Mammary epithelial cell (primary cell): ENCODE measurements at regions of chr17 and their contacts with region 1.

Region 1: GRCh38 chr17:44940321-44940720 is 7.3 kb downstream of the KIF18B start:
- DNase-seq: peak; percentile 49
- H3K4me3 ChIP-seq: no peak overlapping the region
- H3K27ac ChIP-seq: peak overlapping the region; percentile 67
- H3K4me1 ChIP-seq: peaks cover 31% of the 10 kb centered on the region
- H3K27me3 ChIP-seq: no peaks in the 10 kb centered on the region
- CTCF ChIP-seq: no peak

Region 2: DNA sequence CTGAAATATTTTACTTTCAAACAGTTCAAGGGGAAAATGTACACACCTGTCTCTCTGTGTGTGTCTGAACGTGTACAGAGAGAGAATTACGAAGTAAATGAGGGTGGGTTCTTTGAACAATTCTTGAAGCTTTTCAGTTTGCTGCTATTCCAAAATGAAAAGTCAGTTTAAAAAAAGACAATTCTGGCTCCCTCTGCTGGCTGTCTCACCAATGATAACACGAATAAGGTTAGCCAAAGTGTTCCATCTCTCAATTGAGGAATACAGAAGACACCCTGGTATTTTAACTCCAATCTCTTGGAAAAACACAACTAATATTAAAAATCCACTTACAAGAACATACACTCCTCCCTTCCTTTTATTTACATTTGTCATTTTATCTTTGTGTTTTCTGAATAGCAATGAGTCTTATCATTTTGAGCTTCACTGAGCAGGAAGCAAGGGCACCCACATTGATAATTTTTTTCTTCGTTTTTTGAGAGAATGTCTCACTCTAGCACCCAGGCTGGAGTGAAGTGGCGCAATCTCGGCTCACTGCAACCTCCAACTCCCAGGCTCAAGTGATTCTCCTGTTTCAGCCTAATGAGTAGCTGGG is 61.6 kb before region 1 on chr17:
- CTCF ChIA-PET with region 1: no interaction called
- dilution Hi-C with region 1: no loop called
- in situ Hi-C with region 1: no loop called
- intact Hi-C with region 1: no loop called
- DNase-seq: no peak
- H3K4me3 ChIP-seq: no peak overlapping the region
- H3K27ac ChIP-seq: no peak overlapping the region
- H3K4me1 ChIP-seq: no peaks in the 10 kb centered on the region
- H3K27me3 ChIP-seq: no peaks in the 10 kb centered on the region
- CTCF ChIP-seq: peak; percentile 46 to 64

Region 3: DNA sequence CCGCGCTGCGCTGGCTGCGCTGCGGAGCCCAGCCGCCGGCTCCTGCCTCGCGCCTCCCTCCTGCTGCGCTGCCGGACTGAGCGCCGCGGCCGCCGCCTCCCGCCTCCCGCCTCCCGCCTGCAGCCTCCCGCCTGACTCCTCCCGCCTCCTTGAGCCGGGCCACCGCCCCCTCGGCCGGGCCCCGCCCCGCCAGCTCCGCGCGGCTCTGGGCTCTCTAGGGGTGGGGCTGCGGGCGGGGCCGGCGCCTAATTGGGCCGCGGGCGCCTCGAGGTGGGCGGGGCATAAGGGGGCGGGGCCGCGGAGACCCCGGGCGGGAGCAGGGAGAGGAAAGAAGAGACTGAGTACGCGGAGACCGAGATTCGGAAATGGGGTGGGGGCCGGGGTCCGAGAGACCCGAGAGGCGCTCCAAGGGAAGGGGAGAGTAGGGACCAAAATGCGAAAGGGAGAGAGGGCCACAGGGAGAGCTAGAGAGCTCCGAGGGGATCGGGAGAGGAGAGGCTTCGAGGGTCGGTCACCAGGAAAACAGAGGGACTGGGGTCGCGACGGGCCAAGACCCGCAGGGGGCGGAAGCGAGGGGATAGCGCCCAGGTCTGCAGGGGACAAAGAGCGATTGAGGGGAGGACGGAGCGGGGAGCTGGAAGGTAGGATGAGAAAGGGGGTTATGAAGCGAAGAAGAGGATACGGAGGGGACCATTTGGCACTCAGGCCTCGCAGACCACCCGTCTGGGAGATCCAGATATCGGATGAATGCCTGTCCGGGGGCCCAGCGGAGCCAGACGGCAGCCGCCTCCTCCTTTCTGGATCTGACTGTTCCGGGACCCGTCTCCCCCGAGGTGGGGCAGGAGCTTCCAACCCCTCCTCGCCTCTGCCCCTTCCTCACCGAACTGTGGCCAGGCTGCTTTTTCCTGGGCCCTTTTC is 28.2 kb after region 1 on chr17 and contains the start of gene C1QL1:
- CTCF ChIA-PET with region 1: no interaction called
- dilution Hi-C with region 1: no loop called
- in situ Hi-C with region 1: no loop called
- intact Hi-C with region 1: loop called (anchors 1 kb)
- DNase-seq: peak; percentile 87
- H3K4me3 ChIP-seq: peak within 1 kb of the TSS; percentile 45 to 61 (median 49)
- H3K27ac ChIP-seq: no peak within 1 kb of the TSS
- H3K4me1 ChIP-seq: peaks cover 44% of the 10 kb centered on the region
- H3K27me3 ChIP-seq: peaks cover 14% of the 10 kb centered on the region
- CTCF ChIP-seq: peak in 1 of 2 donors; percentile 18
- total RNA-seq, gene C1QL1: 0.54 TPM in 1 of 2 donors, not detected in the other